Activated CD8-positive, alpha-beta T cell treated with anti-CD3 and anti-CD28 coated beads, Interleukin-2, amount 10 ng/mL, durations not matched to agents 7 days and 5 days (primary cell): ENCODE measurements at regions of chr6 and their contacts with region 1.

Region 1: GRCh38 chr6:26270903-26271667 is 93.9 kb upstream of the BTN3A2 start:
- DNase-seq: peak; percentile 91
- ATAC-seq: peak; percentile 47
- H3K4me3 Mint-ChIP-seq: no peak overlapping the region
- H3K27ac Mint-ChIP-seq: no peak overlapping the region
- H3K4me1 Mint-ChIP-seq: peaks cover 40% of the 10 kb centered on the region
- H3K27me3 Mint-ChIP-seq: no peaks in the 10 kb centered on the region

Region 2: DNA sequence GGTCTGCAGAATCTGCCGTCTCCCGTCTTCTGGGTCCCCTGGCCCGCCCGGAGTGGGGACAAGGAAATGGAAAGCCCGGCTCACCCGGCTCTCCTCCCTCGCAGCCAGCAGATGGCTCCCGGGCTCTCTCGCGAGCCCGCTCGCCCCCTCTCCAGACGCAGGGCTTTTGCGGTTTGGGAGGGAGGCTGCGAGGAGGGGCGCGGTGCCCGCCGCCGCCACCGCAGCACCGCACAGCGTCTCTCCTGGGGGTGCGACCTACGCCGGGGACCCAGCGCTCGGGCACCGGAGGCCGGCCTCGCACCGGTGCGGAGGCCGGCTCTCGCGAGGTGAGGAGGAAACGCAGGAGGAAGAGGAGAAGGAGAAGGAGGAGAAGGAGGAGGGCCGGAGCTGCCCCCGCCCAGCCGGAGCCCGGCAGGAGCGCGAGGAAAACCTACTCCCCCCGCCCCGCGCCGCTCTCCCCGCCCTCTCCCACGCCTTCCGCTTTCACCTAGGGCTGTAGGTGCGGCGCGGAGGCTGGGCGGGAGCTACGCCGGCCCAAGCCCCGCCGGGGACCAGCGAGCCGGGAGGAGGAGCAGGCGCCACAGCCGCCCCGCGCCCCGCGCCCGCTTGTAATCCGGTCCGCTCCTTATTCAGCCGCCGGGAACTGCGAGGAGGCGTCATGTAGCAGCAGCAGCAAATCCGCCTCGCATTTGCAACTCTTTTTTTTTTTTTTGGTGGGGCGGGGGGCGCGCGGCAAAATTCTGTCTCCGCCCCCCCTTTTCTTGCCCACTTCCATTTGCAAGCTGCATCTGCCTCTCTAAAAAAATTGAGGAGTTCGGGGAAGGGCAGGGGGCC is 992.0 kb before region 1 on chr6 and contains the start of gene CARMIL1:
- CTCF ChIA-PET with region 1: no interaction called
- POLR2A ChIA-PET with region 1: no interaction called
- DNase-seq: peak; percentile 82
- ATAC-seq: peak; percentile 91
- H3K4me3 Mint-ChIP-seq: peak within 1 kb of the TSS; percentile 76
- H3K27ac Mint-ChIP-seq: peak within 1 kb of the TSS; percentile 48
- H3K4me1 Mint-ChIP-seq: peaks cover 20% of the 10 kb centered on the region
- H3K27me3 Mint-ChIP-seq: peaks cover 6% of the 10 kb centered on the region
- total RNA-seq, gene CARMIL1: 4.6 to 4.8 TPM

Region 3: GRCh38 chr6:26122793-26123674 is 148.1 kb before region 1 on chr6:
- CTCF ChIA-PET with region 1: no interaction called
- POLR2A ChIA-PET with region 1: interaction called, 134 read pairs
- DNase-seq: peak; percentile 98
- ATAC-seq: peak; percentile 50
- H3K4me3 Mint-ChIP-seq: peak overlapping the region; percentile 95
- H3K27ac Mint-ChIP-seq: peak overlapping the region; percentile 100
- H3K4me1 Mint-ChIP-seq: peaks cover 44% of the 10 kb centered on the region
- H3K27me3 Mint-ChIP-seq: peaks cover 1% of the 10 kb centered on the region

Region 4: GRCh38 chr6:26204332-26205165 is 66.5 kb before region 1 on chr6:
- CTCF ChIA-PET with region 1: interaction called, 3 read pairs
- POLR2A ChIA-PET with region 1: interaction called, 320 read pairs
- DNase-seq: peak; percentile 95
- ATAC-seq: peak; percentile 66
- H3K4me3 Mint-ChIP-seq: no peak overlapping the region
- H3K27ac Mint-ChIP-seq: no peak overlapping the region
- H3K4me1 Mint-ChIP-seq: peaks cover 41% of the 10 kb centered on the region
- H3K27me3 Mint-ChIP-seq: no peaks in the 10 kb centered on the region

Region 5: DNA sequence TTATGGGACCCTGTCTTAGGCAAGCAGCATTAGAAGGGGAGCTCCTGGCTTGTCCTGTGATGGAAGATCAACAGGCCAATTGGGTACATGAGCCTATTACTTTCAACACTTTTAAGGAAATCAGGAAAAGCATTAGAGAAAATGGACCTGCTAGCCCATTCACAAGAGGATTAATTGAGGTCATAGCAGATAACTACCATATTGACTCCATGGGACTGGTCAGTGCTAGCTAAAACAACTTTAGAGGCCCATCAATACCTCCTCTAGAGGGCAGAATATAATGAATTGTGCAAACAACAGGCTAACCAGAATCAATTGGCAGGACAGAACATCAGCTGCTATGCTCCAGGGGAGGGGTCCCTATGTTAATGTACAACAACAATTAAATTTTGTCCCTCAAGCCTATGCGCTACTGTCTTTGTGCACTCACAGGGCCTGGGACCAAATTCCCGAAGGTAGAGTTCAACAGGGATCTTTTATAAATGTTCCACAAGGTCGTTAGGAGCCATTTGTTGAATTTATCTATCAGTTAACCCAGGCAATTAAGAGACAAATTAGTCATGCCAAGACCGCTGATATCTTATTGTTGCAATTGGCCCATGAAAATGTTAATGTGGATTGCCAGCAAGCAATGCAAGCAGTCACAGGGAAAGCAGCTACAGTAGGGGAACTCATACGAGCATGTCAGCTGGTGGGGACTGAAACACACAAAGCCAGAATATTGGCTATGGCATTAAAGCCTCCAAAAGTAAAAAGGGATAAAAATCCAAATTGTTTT is 12.7 kb before region 1 on chr6:
- CTCF ChIA-PET with region 1: interaction called, 38 read pairs
- POLR2A ChIA-PET with region 1: interaction called, 231 read pairs
- DNase-seq: no peak
- ATAC-seq: no peak
- H3K4me3 Mint-ChIP-seq: no peak overlapping the region
- H3K27ac Mint-ChIP-seq: no peak overlapping the region
- H3K4me1 Mint-ChIP-seq: peaks cover 19% of the 10 kb centered on the region
- H3K27me3 Mint-ChIP-seq: no peaks in the 10 kb centered on the region

Region 6: GRCh38 chr6:26473758-26474438 is 202.8 kb after region 1 on chr6:
- CTCF ChIA-PET with region 1: no interaction called
- POLR2A ChIA-PET with region 1: interaction called, 13 read pairs
- DNase-seq: peak; percentile 89
- ATAC-seq: peak; percentile 98
- H3K4me3 Mint-ChIP-seq: peak overlapping the region; percentile 100
- H3K27ac Mint-ChIP-seq: peak overlapping the region; percentile 100
- H3K4me1 Mint-ChIP-seq: peaks cover 35% of the 10 kb centered on the region
- H3K27me3 Mint-ChIP-seq: no peaks in the 10 kb centered on the region

Region 7: DNA sequence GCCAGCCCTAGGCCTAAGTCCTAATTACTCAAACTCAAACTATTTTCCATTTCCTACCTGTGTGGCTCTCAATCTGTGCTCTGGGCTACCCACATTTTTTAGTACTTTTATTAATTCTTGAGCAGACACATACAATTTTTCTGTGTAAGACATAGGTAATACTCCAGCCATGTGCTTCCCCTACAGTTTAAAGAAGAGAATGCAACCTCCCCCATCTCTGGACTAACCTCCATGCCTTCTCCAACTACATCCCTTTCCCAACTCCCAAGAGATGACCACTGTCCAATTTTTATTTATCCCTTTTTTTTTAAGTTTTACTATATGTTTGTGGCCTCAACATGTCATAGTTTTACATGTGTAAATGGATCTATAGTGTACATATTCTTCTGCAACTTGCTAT is 272.9 kb after region 1 on chr6:
- CTCF ChIA-PET with region 1: no interaction called
- POLR2A ChIA-PET with region 1: no interaction called
- DNase-seq: peak; percentile 21
- ATAC-seq: peak; percentile 75
- H3K4me3 Mint-ChIP-seq: no peak overlapping the region
- H3K27ac Mint-ChIP-seq: no peak overlapping the region
- H3K4me1 Mint-ChIP-seq: peaks cover 39% of the 10 kb centered on the region
- H3K27me3 Mint-ChIP-seq: no peaks in the 10 kb centered on the region

Region 8: DNA sequence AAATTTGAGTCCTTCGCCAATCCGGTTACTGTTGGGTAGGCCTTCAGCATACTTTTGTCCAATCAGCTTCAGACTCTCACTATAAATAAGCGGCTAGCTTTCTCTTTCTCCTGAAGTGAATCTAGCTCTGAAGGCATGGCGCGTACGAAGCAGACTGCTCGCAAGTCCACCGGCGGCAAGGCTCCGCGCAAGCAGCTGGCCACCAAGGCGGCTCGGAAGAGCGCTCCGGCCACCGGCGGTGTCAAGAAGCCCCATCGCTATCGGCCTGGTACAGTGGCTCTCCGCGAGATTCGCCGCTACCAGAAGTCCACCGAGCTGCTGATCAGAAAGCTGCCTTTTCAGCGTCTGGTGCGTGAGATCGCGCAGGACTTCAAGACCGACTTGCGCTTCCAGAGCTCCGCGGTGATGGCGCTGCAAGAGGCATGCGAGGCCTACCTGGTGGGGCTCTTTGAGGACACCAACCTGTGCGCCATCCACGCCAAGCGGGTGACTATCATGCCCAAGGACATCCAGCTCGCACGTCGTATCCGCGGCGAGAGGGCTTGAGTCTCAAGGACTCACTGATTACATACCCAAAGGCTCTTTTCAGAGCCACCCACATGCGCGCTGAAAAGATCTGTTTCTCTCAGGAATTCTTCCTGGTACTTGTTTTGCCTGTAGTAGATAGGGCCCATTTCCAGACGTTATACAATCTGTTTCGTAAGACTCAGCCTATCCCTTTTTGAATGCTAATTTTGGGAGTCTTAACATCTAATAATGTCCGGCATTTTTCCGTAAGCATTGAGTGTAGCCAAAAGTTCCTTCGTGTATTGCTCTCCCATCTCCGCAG is 1539.1 kb after region 1 on chr6:
- CTCF ChIA-PET with region 1: no interaction called
- POLR2A ChIA-PET with region 1: interaction called, 112 read pairs
- DNase-seq: peak; percentile 89
- ATAC-seq: peak; percentile 32
- H3K4me3 Mint-ChIP-seq: peak overlapping the region; percentile 95
- H3K27ac Mint-ChIP-seq: peak overlapping the region; percentile 98
- H3K4me1 Mint-ChIP-seq: peaks cover 66% of the 10 kb centered on the region
- H3K27me3 Mint-ChIP-seq: peaks cover 2% of the 10 kb centered on the region